GM23248 (cell line): ENCODE measurements at regions of chr10 and their contacts with region 1.

Region 1: GRCh38 chr10:794466-794865 is 105.0 kb upstream of the DIP2C start:
- DNase-seq: peak; percentile 51
- H3K4me3 ChIP-seq: no peak overlapping the region
- H3K27ac ChIP-seq: no peak overlapping the region
- H3K4me1 ChIP-seq: no peaks in the 10 kb centered on the region
- H3K27me3 ChIP-seq: no peaks in the 10 kb centered on the region

Region 2: DNA sequence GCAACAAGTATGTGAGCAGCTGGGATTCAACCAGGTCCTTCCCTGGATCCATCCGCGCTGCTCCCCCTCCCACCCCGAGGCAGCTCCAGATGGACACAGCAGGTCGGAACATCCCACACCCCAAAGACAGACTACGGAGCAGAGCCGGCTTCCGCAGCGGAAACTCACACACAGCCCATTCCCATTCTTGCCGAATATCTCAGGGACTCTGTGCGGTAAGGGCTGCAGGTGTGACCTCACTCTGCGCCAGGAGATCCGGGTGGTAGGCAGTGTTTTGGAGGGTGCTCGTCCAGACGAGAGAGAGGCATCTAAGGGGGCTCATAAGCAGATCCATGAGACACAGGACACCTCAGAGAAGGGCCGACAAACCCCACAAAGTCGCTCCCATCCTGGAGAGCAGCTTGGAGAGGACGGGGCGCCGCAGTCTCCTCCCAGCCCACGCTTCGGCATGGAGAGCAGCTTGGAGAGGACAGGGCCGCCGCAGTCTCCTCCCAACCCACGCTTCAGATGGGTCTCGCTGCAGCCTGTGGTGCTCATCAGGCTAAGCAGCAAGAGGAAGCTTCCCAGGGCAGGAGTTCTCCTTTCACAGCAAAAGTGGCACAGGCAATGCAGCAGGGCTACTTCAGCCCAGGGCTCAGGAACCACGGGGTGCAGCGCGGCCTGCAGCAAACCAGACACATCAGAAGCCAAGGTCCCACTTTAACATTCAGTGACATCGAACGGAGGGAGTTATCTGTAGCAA is 284.9 kb before region 1 on chr10:
- in situ Hi-C with region 1: loop called (anchors 5 kb)
- DNase-seq: no peak
- H3K4me3 ChIP-seq: no peak overlapping the region
- H3K27ac ChIP-seq: no peak overlapping the region
- H3K4me1 ChIP-seq: 0 out of 2 replicates have a peak, but pooled peaks cover 7% of the 10 kb centered on the region
- H3K27me3 ChIP-seq: no peaks in the 10 kb centered on the region

Region 3: DNA sequence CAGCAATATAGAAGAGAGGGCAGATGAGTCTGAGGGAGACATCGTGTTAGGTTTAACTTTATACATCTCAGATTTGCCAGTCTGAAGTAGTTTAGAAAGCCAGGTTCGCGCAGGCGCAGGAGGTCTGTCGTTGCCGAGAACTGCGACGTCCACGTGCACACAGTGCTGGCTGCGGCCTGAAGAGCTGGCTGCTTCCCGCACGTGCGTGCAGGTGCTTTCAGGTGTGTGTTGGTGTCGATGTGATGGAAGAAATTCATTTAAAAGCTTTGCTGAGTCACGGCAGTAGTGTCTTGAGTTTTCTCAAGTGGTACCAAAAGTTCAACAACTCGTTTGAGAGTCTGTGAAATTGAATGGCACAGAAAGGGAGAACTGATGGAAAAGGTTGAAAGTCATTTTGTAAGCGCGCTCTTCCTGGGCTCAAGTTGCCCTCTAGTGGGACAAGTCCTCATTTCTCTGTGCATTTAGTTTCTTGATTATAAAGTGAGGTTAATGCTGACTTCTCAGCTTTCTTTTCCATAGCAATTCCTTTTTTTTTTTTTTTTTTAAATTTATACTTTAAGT is 280.4 kb after region 1 on chr10:
- in situ Hi-C with region 1: no loop called
- DNase-seq: peak; percentile 23
- H3K4me3 ChIP-seq: no peak overlapping the region
- H3K27ac ChIP-seq: no peak overlapping the region
- H3K4me1 ChIP-seq: peaks cover 7% of the 10 kb centered on the region; the same call in 1 of the 2 replicates
- H3K27me3 ChIP-seq: no peaks in the 10 kb centered on the region

Region 4: GRCh38 chr10:1109795-1110673 is 315.6 kb after region 1 on chr10:
- in situ Hi-C with region 1: no loop called
- DNase-seq: peak; percentile 70
- H3K4me3 ChIP-seq: no peak overlapping the region
- H3K27ac ChIP-seq: no peak overlapping the region
- H3K4me1 ChIP-seq: no peaks in the 10 kb centered on the region
- H3K27me3 ChIP-seq: no peaks in the 10 kb centered on the region